ENCODE measurements at regions of chr3 and their contacts with region 1.

Region 1: GRCh38 chr3:28726840-28727239 is 378.2 kb upstream of the AZI2 start:
- DNase-seq: peak; percentile 10
- ATAC-seq: peak; percentile 84
- H3K4me3 ChIP-seq: no peak overlapping the region
- H3K27ac ChIP-seq: no peak overlapping the region
- H3K4me1 ChIP-seq: no peaks in the 10 kb centered on the region
- H3K27me3 ChIP-seq: no peaks in the 10 kb centered on the region
- CTCF ChIP-seq: peak; percentile 46
- EP300 ChIP-seq: no peak
- POLR2A ChIP-seq: no peak
- RAD21 ChIP-seq: no peak

Region 2: DNA sequence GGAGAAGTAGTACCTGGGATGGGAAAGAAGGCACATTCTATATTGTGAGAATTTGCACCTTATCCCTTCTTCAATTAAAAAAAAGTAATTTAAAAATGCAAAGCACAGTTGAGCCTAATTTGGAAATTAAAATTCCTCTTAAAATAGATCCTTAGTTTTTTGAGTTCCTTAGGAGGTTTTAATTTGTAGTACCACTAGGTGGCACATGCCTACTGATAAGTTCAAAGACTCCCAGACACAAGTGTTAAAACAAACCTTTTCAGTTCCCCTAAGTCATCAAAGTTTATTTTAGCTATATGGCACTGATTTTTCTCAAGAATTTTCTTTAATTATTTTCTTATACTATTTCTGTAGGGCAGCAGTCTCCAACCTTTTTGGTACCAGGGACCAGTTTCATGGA is 250.6 kb before region 1 on chr3:
- CTCF ChIA-PET with region 1: interaction called, 3 read pairs
- POLR2A ChIA-PET with region 1: no interaction called
- in situ Hi-C with region 1: no loop called
- intact Hi-C with region 1: loop called (anchors 1 kb)
- DNase-seq: peak; percentile 23
- ATAC-seq: peak; percentile 31; the same call in 1 of the 3 replicates
- H3K4me3 ChIP-seq: no peak overlapping the region
- H3K27ac ChIP-seq: no peak overlapping the region
- H3K4me1 ChIP-seq: no peaks in the 10 kb centered on the region
- H3K27me3 ChIP-seq: no peaks in the 10 kb centered on the region
- CTCF ChIP-seq: peak; percentile 47
- EP300 ChIP-seq: no peak
- POLR2A ChIP-seq: no peak
- RAD21 ChIP-seq: no peak

Region 3: GRCh38 chr3:28667646-28668621 is 58.9 kb before region 1 on chr3:
- CTCF ChIA-PET with region 1: no interaction called
- POLR2A ChIA-PET with region 1: no interaction called
- in situ Hi-C with region 1: no loop called
- intact Hi-C with region 1: loop called (anchors 1 kb)
- DNase-seq: peak; percentile 46
- ATAC-seq: peak; percentile 96
- H3K4me3 ChIP-seq: no peak overlapping the region
- H3K27ac ChIP-seq: no peak overlapping the region
- H3K4me1 ChIP-seq: no peaks in the 10 kb centered on the region
- H3K27me3 ChIP-seq: no peaks in the 10 kb centered on the region
- CTCF ChIP-seq: peak; percentile 76
- EP300 ChIP-seq: no peak
- POLR2A ChIP-seq: no peak
- RAD21 ChIP-seq: 0 out of 2 replicates have a peak, but pooled peaks have one; percentile 15